MCF 10A (cell line): ENCODE measurements at regions of chr17 and their contacts with region 1.

Region 1: DNA sequence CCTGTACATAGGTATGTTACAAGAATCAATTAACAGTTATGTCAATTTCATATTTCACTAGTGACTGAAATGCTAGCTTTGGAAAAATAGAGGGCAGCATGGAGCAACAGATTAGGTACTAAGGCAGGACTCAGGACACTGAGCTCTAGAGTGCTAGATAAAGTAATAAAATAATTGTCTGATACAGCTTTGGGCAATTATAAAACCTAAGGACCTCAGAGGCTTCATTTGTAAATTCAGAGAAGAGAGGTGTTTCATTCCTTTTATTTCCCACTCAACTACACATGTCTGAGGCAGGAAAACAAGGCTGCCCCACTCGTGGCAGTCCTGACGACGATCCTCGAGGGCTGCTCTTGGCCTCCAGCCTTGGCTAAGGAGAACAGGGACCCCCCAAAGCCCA is 81.5 kb downstream of the CA4 start:
- DNase-seq: peak; percentile 43
- H3K4me3 Mint-ChIP-seq: no peak overlapping the region
- H3K27ac Mint-ChIP-seq: no peak overlapping the region
- H3K4me1 Mint-ChIP-seq: peaks cover 6% of the 10 kb centered on the region
- H3K27me3 Mint-ChIP-seq: no peaks in the 10 kb centered on the region
- CTCF ChIP-seq: peak; percentile 47

Region 2: DNA sequence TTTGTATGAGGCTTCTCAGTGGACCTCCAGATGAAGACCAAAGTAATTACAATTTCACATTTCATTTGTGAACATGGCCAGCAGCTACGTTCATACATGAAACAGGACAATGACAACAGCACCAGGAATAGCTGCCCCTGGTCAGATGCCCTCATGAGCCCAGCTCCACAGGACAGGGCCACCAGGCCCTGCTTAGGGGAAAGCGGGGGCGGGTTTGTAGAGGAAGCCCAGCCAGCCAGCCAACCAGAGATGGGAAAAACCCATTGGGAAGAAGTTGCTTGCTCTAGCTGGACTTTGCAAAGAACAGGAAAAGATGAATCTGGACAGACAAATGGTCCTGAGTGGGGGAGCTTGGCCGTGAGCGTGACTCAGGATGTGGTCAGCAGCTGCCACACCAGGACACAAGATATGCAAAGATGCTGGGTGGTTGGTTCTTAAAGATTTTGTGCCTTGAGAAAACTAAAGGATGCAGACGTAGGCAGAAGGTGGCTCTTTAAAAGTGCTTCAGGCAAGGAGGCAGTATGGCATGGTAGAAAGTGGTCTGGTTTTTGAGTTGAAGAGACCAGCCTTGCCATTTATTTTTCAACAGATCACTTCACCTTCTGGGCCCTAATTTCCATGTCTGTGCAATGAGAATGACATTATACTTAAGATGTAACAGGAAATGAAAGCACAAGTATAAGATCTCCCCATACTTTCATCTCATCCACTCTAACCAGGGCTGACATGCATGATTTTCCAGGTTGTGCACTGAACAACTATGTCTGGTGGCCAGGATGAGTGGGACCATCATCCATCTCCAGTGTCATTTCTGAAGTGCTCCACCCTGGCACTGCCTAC is 124.8 kb before region 1 on chr17:
- CTCF ChIA-PET with region 1: no interaction called
- POLR2A ChIA-PET with region 1: no interaction called
- intact Hi-C with region 1: no loop called
- DNase-seq: no peak
- H3K4me3 Mint-ChIP-seq: no peak overlapping the region
- H3K27ac Mint-ChIP-seq: no peak overlapping the region
- H3K4me1 Mint-ChIP-seq: no peaks in the 10 kb centered on the region
- H3K27me3 Mint-ChIP-seq: peaks cover 11% of the 10 kb centered on the region
- CTCF ChIP-seq: no peak

Region 3: GRCh38 chr17:60142872-60143499 is 88.2 kb before region 1 on chr17:
- CTCF ChIA-PET with region 1: interaction called, 5 read pairs
- POLR2A ChIA-PET with region 1: interaction called, 5 read pairs
- intact Hi-C with region 1: loop called (anchors 10 kb)
- DNase-seq: peak; percentile 91
- H3K4me3 Mint-ChIP-seq: peak overlapping the region; percentile 71
- H3K27ac Mint-ChIP-seq: no peak overlapping the region
- H3K4me1 Mint-ChIP-seq: peaks cover 18% of the 10 kb centered on the region
- H3K27me3 Mint-ChIP-seq: peaks cover 31% of the 10 kb centered on the region
- CTCF ChIP-seq: peak; percentile 66

Region 4: GRCh38 chr17:60247836-60248461 is 16.7 kb after region 1 on chr17:
- CTCF ChIA-PET with region 1: interaction called, 14 read pairs
- POLR2A ChIA-PET with region 1: interaction called, 4 read pairs
- intact Hi-C with region 1: no loop called
- DNase-seq: no peak
- H3K4me3 Mint-ChIP-seq: no peak overlapping the region
- H3K27ac Mint-ChIP-seq: no peak overlapping the region
- H3K4me1 Mint-ChIP-seq: no peaks in the 10 kb centered on the region
- H3K27me3 Mint-ChIP-seq: no peaks in the 10 kb centered on the region
- CTCF ChIP-seq: no peak

Region 5: DNA sequence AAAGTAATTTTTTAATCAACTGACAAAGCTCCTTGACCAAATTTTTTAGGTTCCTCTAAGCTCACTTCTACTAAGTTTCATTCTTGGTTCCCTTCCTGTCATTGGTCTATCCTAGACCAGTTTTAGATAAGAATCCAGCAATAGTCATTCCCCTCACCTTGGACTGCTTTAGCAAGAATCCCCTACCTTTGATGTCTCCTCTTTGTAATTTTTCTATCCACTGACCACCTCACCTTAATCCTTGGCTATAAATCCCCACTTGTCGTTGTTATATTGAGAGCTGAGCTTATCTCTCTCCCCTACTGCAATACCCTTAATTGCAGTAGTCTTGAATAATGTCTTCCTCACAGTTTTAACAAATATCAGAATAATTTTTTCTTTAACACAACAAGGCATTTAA is 53.5 kb after region 1 on chr17:
- CTCF ChIA-PET with region 1: no interaction called
- POLR2A ChIA-PET with region 1: no interaction called
- intact Hi-C with region 1: no loop called
- DNase-seq: no peak
- H3K4me3 Mint-ChIP-seq: no peak overlapping the region
- H3K27ac Mint-ChIP-seq: no peak overlapping the region
- H3K4me1 Mint-ChIP-seq: no peaks in the 10 kb centered on the region
- H3K27me3 Mint-ChIP-seq: no peaks in the 10 kb centered on the region
- CTCF ChIP-seq: no peak

Region 6: DNA sequence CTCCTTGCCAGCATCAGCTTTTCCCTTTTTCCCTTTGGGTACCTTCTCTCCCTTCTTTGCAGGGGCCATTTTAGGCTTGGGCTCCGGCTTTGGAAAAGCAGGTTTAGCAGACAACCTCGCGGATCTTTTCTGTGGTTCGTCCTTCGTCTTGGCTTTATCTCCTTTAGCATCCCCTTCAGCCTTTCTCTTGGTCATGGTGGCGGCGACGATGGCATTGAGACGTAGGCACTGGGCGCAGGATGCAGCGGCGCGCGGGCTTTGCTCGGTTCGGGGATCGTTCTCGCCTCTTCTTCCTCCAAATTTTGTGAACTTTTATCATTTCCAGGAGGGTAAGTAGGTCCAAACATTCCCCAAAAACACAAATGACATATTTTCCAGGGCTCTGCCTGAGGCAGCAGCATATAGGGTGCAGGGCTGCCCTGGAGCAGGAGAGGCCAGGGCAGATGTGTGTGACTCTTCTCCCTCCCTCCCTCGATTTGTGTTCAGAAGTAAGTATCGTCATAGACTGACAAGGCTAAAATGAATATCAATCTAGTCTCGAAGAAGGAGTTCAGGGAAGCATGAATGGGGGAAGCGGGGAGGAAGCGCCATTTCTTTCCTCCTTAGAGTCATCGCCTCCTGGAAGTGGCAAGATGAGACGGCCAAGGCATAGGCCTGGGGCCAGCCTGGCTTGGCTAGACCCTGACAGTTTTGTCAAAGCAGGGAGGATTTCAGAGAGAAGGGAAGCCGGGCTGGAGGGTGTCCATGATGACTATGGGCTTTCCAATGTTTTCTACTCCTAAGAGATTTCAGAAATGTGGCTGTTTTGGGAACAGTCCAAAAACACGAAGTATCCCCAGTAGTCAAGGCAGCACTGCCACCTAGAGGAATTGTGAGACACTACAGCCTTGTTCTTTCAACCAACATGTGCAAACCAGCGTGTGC is 204.3 kb after region 1 on chr17:
- CTCF ChIA-PET with region 1: interaction called, 5 read pairs
- POLR2A ChIA-PET with region 1: interaction called, 5 read pairs
- intact Hi-C with region 1: loop called (anchors 1 kb)
- DNase-seq: peak; percentile 93
- H3K4me3 Mint-ChIP-seq: no peak overlapping the region
- H3K27ac Mint-ChIP-seq: no peak overlapping the region
- H3K4me1 Mint-ChIP-seq: peaks cover 8% of the 10 kb centered on the region
- H3K27me3 Mint-ChIP-seq: no peaks in the 10 kb centered on the region
- CTCF ChIP-seq: peak; percentile 87

Region 7: GRCh38 chr17:60473788-60474187 is 242.6 kb after region 1 on chr17:
- CTCF ChIA-PET with region 1: no interaction called
- POLR2A ChIA-PET with region 1: no interaction called
- intact Hi-C with region 1: no loop called
- DNase-seq: no peak
- H3K4me3 Mint-ChIP-seq: no peak overlapping the region
- H3K27ac Mint-ChIP-seq: no peak overlapping the region
- H3K4me1 Mint-ChIP-seq: peaks cover 11% of the 10 kb centered on the region
- H3K27me3 Mint-ChIP-seq: no peaks in the 10 kb centered on the region
- CTCF ChIP-seq: no peak